Testis (tissue), 5 donors: ENCODE measurements at regions of chr1 and their contacts with region 1.

Region 1: DNA sequence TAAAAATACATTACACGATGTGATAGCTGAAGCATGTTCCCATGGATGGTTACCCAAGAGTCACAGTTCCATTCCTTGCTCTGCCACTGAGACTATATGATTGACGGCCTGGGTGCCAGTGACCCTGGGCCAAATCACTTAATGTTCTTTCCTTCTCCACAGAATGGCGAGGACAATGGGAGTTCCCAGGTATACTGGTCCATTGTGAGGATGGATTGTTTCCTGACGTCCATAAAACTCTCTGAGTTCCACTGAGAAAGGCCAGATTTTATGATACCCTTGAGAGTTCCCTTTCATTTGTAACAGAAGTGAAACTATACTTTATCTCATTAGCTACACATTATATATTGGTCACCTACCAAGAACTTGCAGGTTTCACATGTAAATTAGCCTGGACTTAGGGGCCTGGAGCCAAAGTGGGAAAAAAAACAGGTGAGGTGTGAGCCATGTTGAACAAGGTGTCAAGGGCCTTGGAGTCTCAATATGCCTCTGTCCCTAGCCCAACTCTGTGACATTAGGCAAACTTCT is 502.2 kb upstream of the DAB1 start:
- DNase-seq: no peak
- H3K4me3 ChIP-seq: no peak overlapping the region
- H3K27ac ChIP-seq: no peak overlapping the region
- H3K4me1 ChIP-seq: no peaks in the 10 kb centered on the region
- H3K27me3 ChIP-seq: no peaks in the 10 kb centered on the region
- CTCF ChIP-seq: no peak
- POLR2A ChIP-seq: no peak

Region 2: GRCh38 chr1:57707631-57708030 is 218.5 kb before region 1 on chr1:
- intact Hi-C with region 1: loop called (anchors 5 kb)
- DNase-seq: no peak
- H3K4me3 ChIP-seq: no peak overlapping the region
- H3K27ac ChIP-seq: no peak overlapping the region
- H3K4me1 ChIP-seq: no peaks in the 10 kb centered on the region
- H3K27me3 ChIP-seq: no peaks in the 10 kb centered on the region
- CTCF ChIP-seq: no peak
- POLR2A ChIP-seq: no peak